Caco-2 (cell line): ENCODE measurements at regions of chr15 and their contacts with region 1.

Region 1: DNA sequence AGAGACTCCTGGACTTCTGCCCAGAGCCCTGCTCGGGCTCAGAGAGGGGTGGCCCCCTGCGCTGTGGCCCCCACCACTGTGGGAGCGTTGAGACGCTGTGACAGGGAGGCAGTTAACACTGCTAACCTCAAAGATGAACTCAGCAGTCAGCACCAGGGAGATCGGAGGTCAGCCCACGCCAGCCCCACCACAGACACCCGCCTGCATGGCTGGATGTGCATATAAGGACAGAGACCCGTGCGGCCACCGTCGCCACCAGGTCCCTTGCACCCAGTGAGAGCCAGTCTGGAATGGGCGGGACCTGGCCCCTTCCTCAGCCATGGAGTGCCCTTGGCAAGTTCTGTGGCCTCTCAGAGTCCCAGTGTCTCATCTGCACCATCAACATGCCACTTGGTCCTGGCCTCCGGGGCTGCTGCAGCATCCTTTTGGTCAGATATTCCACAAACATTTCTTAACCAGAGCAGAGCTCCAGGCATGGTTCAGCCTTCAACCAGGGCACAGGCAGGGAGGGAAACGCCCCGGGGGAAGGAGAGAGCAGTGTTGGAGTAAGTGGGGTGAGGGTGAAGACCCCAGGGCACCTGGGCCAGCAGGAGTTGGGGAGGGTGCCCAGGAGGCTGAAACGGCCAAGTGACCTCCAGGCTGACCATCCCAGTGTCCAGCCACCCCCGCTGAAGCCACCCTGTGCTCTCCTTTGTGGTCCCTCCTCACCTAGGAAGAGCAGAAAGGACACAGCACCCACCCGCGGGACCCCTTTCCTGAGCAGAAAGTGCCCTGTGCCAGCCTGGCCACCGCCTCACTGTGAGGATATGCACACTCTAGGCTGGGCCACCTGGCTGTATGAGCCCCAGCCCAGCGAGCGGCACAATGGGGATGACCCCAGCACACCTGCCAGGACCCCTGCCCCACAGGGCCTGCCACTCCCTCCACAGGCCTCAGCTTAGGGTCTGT is 48.3 kb upstream of the FURIN start:
- DNase-seq: no peak
- H3K4me3 ChIP-seq: no peak overlapping the region
- H3K4me3 Mint-ChIP-seq: no peak overlapping the region
- H3K27ac Mint-ChIP-seq: no peak overlapping the region
- H3K4me1 ChIP-seq: peaks cover 18% of the 10 kb centered on the region
- H3K4me1 Mint-ChIP-seq: peaks cover 7% of the 10 kb centered on the region
- H3K27me3 ChIP-seq: no peaks in the 10 kb centered on the region
- H3K27me3 Mint-ChIP-seq: no peaks in the 10 kb centered on the region
- CTCF ChIP-seq: no peak

Region 2: GRCh38 chr15:90869601-90870353 is 49.7 kb after region 1 on chr15:
- CTCF ChIA-PET with region 1: interaction called, 3 read pairs
- POLR2A ChIA-PET with region 1: no interaction called
- intact Hi-C with region 1: loop called (anchors 5 kb)
- DNase-seq: peak; percentile 60 to 78
- H3K4me3 ChIP-seq: no peak overlapping the region
- H3K4me3 Mint-ChIP-seq: peak overlapping the region; percentile 71
- H3K27ac Mint-ChIP-seq: peak overlapping the region; percentile 64
- H3K4me1 ChIP-seq: peaks cover 66% of the 10 kb centered on the region
- H3K4me1 Mint-ChIP-seq: peaks cover 38% of the 10 kb centered on the region
- H3K27me3 ChIP-seq: no peaks in the 10 kb centered on the region
- H3K27me3 Mint-ChIP-seq: no peaks in the 10 kb centered on the region
- CTCF ChIP-seq: no peak